Calu3 (cell line): ENCODE measurements at regions of chr20 and their contacts with region 1.

Region 1: DNA sequence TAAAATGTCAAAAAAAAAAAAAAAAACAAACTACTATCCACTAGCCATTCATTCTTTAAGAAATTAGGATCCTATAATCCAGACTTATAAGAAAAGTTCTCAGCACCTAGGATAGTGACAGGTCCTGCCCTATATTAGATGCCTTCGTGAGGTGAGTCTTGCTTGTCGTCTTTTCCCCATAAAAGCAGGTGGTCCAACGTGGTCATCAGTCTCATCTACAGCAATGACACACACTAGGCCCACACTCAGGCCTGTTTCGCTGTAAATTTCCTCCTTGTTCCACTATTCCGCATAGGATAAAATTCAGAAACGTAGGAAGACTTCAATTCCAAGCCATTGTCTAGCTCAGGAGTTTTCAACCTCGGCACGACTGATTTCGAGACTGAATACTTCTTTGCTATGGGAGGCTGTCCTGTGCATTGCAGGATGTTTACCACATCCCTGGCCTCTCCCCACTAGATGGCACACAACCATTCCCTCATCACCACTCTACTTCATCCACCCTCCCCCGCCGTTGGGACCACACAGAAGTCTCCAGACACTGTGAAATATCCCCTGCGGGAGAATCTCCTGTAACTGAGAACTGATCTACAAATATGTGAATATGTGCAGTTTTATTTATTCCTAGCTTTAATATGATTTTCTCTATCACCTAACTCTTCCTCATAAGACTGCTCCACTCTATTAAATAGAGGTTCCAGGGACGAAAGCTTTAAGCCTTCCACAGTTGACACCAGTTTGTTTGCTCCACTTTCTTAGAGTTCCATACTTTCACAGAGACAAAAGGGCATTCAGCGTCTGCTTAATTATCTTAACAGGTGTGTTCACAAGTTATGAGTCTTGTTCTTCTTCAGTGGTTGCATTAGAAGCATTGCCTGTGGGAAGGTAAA is 346.3 kb downstream of the BMP2 start:
- DNase-seq: peak; percentile 57
- H3K4me3 Mint-ChIP-seq: no peak overlapping the region
- H3K27ac Mint-ChIP-seq: no peak overlapping the region
- H3K4me1 Mint-ChIP-seq: peaks cover 8% of the 10 kb centered on the region
- H3K27me3 Mint-ChIP-seq: no peaks in the 10 kb centered on the region
- CTCF ChIP-seq: peak; percentile 35

Region 2: GRCh38 chr20:7195704-7196103 is 81.9 kb after region 1 on chr20:
- CTCF ChIA-PET with region 1: no interaction called
- intact Hi-C with region 1: no loop called
- DNase-seq: no peak
- H3K4me3 Mint-ChIP-seq: no peak overlapping the region
- H3K27ac Mint-ChIP-seq: no peak overlapping the region
- H3K4me1 Mint-ChIP-seq: no peaks in the 10 kb centered on the region
- H3K27me3 Mint-ChIP-seq: no peaks in the 10 kb centered on the region
- CTCF ChIP-seq: no peak

Region 3: DNA sequence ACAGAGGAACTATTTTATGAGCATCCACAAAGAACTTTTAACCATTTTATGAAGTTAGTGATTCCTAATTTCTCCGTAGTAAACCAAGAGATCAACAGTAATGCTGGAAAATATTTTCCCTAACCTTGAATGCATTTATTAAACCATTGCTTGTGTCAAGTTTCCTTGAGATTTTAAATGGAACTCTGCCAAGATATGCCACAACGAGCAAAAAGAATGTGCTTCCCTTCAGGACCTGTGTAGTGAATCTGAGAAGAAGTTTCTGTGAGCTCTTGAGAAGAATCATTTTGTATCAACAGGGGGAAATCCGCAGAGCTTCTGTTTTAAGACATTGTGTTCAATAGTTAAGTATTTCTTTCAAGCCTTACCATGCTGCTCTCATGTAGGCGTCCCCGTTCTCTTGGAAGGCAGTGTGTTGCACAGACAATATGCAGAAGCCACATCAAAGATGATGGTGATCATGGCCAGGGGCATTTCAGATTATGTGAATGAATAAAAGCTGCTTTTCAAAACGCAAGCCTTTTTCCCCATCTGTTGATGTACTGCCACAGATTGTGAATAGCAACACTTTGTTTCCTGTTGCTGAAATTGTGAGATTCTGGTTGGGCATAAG is 93.5 kb after region 1 on chr20:
- CTCF ChIA-PET with region 1: no interaction called
- intact Hi-C with region 1: no loop called
- DNase-seq: no peak
- H3K4me3 Mint-ChIP-seq: no peak overlapping the region
- H3K27ac Mint-ChIP-seq: no peak overlapping the region
- H3K4me1 Mint-ChIP-seq: no peaks in the 10 kb centered on the region
- H3K27me3 Mint-ChIP-seq: no peaks in the 10 kb centered on the region
- CTCF ChIP-seq: no peak

Region 4: DNA sequence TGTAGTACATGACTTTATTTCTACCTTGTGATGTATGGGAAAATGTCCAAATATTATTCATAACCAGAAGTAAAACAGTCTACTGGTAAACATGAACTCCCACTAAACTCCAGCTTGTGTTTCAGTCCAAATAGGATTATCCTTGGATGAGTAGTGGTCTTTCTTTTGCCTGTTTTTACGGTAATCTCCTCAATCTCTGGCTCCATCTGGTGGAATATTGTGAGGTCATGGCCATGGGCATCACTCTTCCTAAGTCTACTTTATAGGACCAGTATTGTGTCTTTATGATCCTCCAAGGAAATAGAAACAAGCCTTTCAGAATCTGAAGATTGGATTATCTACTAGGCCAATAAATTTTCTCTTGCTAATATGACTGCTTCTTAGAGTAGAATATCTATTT is 158.7 kb after region 1 on chr20:
- CTCF ChIA-PET with region 1: no interaction called
- intact Hi-C with region 1: loop called (anchors 5 kb)
- DNase-seq: no peak
- H3K4me3 Mint-ChIP-seq: no peak overlapping the region
- H3K27ac Mint-ChIP-seq: no peak overlapping the region
- H3K4me1 Mint-ChIP-seq: no peaks in the 10 kb centered on the region
- H3K27me3 Mint-ChIP-seq: no peaks in the 10 kb centered on the region
- CTCF ChIP-seq: no peak

Region 5: DNA sequence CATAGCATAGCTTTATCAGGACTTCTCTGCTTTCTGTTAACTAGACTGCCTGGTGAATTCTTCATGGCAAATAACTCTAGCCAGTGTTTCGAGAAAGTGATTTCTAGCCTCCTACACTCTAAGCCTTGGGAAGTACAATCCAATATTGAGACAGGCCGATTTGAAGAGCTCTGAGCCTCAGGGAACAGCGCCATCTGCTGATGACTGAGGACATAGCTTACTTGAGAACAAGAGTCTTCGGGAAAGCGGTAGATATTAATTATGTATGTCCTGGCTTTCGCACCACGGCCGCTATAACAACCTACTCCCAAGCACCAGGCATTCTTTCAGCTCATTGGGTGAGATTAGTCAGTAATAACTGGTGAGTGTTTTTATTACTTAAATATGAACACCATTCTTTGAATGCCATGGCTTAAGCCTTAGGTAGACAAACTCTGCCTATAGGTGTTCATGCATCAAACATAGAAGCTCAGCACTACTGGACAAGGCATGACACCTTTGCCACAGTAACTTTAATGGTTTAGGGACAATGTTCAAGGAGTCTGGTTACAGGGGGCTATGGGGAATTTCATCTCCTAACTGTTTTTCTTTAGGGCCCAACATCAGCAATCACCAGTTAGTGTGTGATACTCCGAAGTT is 172.2 kb after region 1 on chr20:
- CTCF ChIA-PET with region 1: interaction called, 4 read pairs
- intact Hi-C with region 1: loop called (anchors 5 kb)
- DNase-seq: peak; percentile 60
- H3K4me3 Mint-ChIP-seq: no peak overlapping the region
- H3K27ac Mint-ChIP-seq: no peak overlapping the region
- H3K4me1 Mint-ChIP-seq: peaks cover under 1% of the 10 kb centered on the region
- H3K27me3 Mint-ChIP-seq: no peaks in the 10 kb centered on the region
- CTCF ChIP-seq: peak; percentile 61

Region 6: DNA sequence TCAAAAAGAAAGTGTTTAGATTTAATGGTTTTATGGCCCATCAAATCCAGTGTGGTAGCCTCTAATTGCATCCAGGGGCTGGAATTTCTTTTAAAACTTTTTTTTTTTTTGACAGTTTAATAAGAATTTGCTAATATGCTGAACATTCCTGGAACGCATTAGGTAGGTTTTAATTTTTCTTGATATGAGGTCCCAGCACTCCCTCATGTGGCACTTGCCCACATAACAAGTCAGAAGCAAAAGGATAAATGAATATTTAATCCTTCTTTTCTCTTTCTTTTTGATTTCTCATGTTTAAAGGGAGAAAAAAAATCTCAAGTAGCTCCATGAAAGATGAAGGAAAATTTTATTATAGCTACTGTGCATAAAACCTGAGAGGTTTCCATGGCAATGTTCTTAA is 812.9 kb after region 1 on chr20:
- CTCF ChIA-PET with region 1: no interaction called
- intact Hi-C with region 1: loop called (anchors 10 kb)
- DNase-seq: peak; percentile 12
- H3K4me3 Mint-ChIP-seq: no peak overlapping the region
- H3K27ac Mint-ChIP-seq: no peak overlapping the region
- H3K4me1 Mint-ChIP-seq: no peaks in the 10 kb centered on the region
- H3K27me3 Mint-ChIP-seq: no peaks in the 10 kb centered on the region
- CTCF ChIP-seq: no peak